ENCODE measurements at regions of chr1 and their contacts with region 1.

Region 1: DNA sequence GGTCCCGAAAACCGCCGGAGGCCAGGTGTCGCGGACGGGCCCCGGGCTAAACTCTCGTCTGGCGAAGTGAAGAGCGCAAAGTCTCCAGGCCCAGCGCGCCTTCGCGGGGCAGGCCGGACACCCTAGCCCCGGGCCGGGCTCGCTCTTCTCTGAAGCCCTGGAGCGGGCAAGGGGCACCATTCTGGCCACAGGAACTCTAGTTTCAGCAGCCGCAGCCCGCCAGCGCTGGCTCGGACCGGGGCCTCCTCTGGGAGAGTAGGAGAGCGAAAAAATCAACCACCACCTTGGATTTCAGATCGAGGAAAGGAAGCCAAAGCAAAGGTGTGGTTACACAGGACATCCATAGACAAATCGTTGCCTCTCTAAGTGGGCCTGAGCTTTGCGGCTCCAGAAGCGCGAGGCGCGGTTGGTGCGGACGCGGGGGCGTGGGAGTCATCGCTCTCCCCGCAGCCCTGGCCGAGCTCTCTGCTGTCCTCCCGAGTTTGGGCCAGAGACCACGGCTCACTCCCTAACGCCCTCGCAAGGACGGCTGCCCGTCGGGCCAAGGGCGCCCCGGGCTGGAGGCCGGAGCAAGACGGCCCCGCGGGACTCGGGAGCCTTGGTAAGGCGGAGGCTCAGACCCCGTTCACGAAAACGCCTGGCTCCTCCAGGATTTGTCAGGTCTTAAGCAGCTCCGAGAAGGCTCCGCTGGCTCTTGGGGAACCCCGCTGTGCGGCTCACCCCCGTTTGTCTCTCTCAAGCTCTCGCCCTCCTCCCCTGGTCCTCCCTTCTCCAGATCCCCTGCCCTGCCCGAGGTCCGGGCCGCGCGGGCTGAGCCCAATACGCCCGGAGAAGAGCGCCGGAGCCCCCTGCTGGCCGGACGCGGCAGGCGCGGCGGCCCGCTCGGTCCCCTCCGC is 132.9 kb upstream of the DPYD start:
- DNase-seq: peak; percentile 46
- H3K4me3 Mint-ChIP-seq: peak overlapping the region; percentile 79
- H3K27ac Mint-ChIP-seq: no peak overlapping the region
- H3K4me1 Mint-ChIP-seq: peaks cover 28% of the 10 kb centered on the region
- H3K27me3 Mint-ChIP-seq: peaks cover 58% of the 10 kb centered on the region

Region 2: GRCh38 chr1:96721416-96722160 is 1332.1 kb before region 1 on chr1 and contains the start of gene PTBP2:
- intact Hi-C with region 1: loop called (anchors 5 kb)
- DNase-seq: peak; percentile 79
- H3K4me3 Mint-ChIP-seq: peak within 1 kb of the TSS; percentile 95
- H3K27ac Mint-ChIP-seq: peak within 1 kb of the TSS; percentile 94
- H3K4me1 Mint-ChIP-seq: peaks cover 22% of the 10 kb centered on the region
- H3K27me3 Mint-ChIP-seq: peaks cover 15% of the 10 kb centered on the region
- total RNA-seq, gene PTBP2: 17.7 and 19.7 TPM in 2 replicates

Region 3: DNA sequence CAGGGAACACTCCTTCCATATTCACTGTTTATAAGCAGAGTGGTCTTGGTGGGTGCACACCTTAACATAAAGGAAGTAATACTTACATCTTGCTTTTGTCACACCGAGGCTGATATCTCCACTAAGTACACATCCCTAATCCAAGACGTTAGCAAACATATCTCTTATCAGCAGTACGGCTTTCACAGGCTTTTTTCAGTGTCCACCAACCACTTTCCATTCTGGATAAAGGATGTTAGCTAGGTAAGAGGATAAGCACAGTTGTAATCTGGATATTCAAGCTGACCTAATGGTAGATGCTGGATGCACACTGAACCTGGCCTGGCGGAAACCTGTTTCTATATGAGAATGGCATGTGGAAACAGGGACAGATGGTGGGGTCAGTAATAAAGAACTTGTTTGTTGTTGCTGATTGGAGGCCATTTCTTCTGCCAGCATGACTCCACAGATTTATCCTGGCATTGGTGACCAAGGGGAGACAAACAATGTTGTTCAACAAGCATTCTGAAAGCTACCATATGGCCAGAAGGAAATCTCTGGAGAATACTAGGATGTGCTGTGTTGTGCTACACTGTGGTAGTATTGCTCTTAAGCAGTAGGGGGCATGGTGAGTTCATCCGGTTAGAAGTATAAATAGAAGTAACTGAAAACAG is 915.7 kb before region 1 on chr1:
- intact Hi-C with region 1: loop called (anchors 1 kb)
- DNase-seq: no peak
- H3K4me3 Mint-ChIP-seq: no peak overlapping the region
- H3K27ac Mint-ChIP-seq: no peak overlapping the region
- H3K4me1 Mint-ChIP-seq: peaks cover 5% of the 10 kb centered on the region
- H3K27me3 Mint-ChIP-seq: no peaks in the 10 kb centered on the region

Region 4: DNA sequence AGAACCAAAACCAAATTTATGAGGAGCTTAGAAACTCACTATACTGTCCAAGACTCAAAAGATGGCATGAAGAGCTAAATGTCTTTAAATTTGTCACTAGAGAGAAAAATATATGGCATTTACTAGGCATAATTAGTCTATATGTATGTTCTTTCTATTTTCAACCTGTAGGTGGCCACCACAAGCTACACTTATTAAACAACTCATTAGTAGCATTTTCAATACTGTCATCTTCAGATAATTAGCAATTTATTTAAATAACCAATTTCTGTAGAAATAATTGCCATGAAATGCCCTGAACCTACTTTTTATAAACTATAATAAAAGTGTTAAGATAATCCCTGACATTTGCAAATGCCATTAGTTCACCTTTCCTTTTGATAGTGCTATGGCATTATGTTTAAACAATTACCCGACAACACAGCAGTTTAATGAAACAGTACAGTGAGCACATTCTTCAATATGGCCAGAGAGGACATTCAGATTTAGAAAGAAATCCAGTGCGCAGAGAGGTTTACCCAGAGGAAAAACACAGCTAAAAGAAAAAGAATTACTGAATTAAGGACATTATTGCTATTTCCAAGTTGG is 809.7 kb before region 1 on chr1:
- intact Hi-C with region 1: loop called (anchors 2 kb)
- DNase-seq: no peak
- H3K4me3 Mint-ChIP-seq: no peak overlapping the region
- H3K27ac Mint-ChIP-seq: no peak overlapping the region
- H3K4me1 Mint-ChIP-seq: no peaks in the 10 kb centered on the region
- H3K27me3 Mint-ChIP-seq: no peaks in the 10 kb centered on the region

Region 5: GRCh38 chr1:97820470-97821188 is 233.1 kb before region 1 on chr1:
- intact Hi-C with region 1: loop called (anchors 1 kb)
- DNase-seq: no peak
- H3K4me3 Mint-ChIP-seq: no peak overlapping the region
- H3K27ac Mint-ChIP-seq: no peak overlapping the region
- H3K4me1 Mint-ChIP-seq: no peaks in the 10 kb centered on the region
- H3K27me3 Mint-ChIP-seq: no peaks in the 10 kb centered on the region

Region 6: GRCh38 chr1:98468111-98468717 is 414.5 kb after region 1 on chr1:
- intact Hi-C with region 1: loop called (anchors 1 kb)
- DNase-seq: no peak
- H3K4me3 Mint-ChIP-seq: no peak overlapping the region
- H3K27ac Mint-ChIP-seq: no peak overlapping the region
- H3K4me1 Mint-ChIP-seq: no peaks in the 10 kb centered on the region
- H3K27me3 Mint-ChIP-seq: peaks cover 2% of the 10 kb centered on the region

Measured in activated T-helper 1 cell treated with anti-CD3 and anti-CD28 coated beads, Interleukin-12 subunit alpha, Interleukin-12 subunit beta, Interleukin-2, Interleukin-4 antibody, amounts not matched to agents 30 ng/mL and 10 ng/mL and 1 ng/mL, durations not matched to agents 14 hours and 24 hours and 36 hours (primary cell).